PC-9 (cell line): ENCODE measurements at regions of chr10 and their contacts with region 1.

Region 1: GRCh38 chr10:79127151-79127961 is 58.6 kb downstream of the ZMIZ1 start:
- DNase-seq: peak; percentile 91 to 95
- H3K4me3 ChIP-seq: no peak overlapping the region
- H3K27ac ChIP-seq: peak overlapping the region; percentile 44
- H3K4me1 ChIP-seq: peaks cover 61% of the 10 kb centered on the region
- H3K27me3 ChIP-seq: no peaks in the 10 kb centered on the region
- CTCF ChIP-seq: no peak; the same call in 1 of the 2 replicates

Region 2: DNA sequence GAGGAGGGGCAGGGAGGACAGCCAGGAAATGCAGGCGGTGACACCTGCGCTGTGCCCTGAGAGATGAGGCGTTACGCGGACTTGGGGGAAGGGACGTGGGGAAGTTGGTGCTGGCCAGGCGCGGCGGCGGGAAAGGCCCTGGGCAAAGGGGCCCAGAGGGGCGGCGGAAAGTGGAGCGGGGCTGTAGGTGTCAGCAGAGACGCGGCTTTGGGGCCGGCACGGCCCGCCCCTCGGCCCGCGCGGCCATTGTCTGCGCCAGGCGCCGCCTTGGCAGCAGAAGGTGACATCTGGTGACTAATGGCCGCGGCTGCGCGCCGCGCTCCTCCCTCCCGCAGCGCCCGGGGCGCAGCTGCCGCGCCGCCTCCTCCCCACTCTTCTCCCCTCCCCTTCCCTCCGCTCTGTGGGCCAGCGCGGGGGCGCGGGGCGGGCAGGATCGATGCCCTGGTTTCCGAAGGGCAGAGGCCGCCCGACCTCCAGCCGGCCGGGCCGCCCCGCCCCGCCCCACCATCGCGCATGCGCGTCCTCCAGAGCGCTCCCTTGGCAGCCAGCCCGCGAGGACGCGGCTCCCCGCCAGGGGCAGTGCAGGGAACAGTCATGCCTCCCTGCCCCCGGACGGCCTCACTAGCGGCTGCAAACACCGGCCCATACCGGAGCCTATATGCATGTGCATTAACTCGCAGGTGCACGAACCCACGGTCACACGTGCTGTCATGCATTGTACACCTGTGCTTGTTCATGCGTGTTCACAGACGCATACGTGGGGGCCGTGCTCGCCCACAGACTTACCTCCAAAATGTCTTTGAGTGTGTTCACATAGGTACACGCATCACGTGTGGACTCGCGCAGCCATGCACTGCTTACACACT is 824.1 kb before region 1 on chr10:
- CTCF ChIA-PET with region 1: no interaction called
- POLR2A ChIA-PET with region 1: no interaction called
- intact Hi-C with region 1: loop called (anchors 1 kb)
- DNase-seq: peak; percentile 83 to 98
- H3K4me3 ChIP-seq: peak overlapping the region; percentile 66
- H3K27ac ChIP-seq: peak overlapping the region; percentile 42; the same call in 1 of the 2 replicates
- H3K4me1 ChIP-seq: peaks cover 10% of the 10 kb centered on the region
- H3K27me3 ChIP-seq: no peaks in the 10 kb centered on the region
- CTCF ChIP-seq: peak; percentile 81

Region 3: GRCh38 chr10:78747401-78748234 is 379.7 kb before region 1 on chr10:
- CTCF ChIA-PET with region 1: no interaction called
- POLR2A ChIA-PET with region 1: interaction called, 12 read pairs
- intact Hi-C with region 1: no loop called
- DNase-seq: no peak
- H3K4me3 ChIP-seq: no peak overlapping the region
- H3K27ac ChIP-seq: no peak overlapping the region
- H3K4me1 ChIP-seq: no peaks in the 10 kb centered on the region
- H3K27me3 ChIP-seq: no peaks in the 10 kb centered on the region
- CTCF ChIP-seq: no peak

Region 4: GRCh38 chr10:79084012-79084971 is 43.1 kb before region 1 on chr10:
- CTCF ChIA-PET with region 1: no interaction called
- POLR2A ChIA-PET with region 1: no interaction called
- intact Hi-C with region 1: loop called (anchors 2 kb)
- DNase-seq: peak; percentile 82 to 83
- H3K4me3 ChIP-seq: no peak overlapping the region
- H3K27ac ChIP-seq: 0 out of 2 replicates have a peak overlapping the region, but pooled peaks have one; percentile 1
- H3K4me1 ChIP-seq: peaks cover 53% of the 10 kb centered on the region
- H3K27me3 ChIP-seq: no peaks in the 10 kb centered on the region
- CTCF ChIP-seq: no peak

Region 5: DNA sequence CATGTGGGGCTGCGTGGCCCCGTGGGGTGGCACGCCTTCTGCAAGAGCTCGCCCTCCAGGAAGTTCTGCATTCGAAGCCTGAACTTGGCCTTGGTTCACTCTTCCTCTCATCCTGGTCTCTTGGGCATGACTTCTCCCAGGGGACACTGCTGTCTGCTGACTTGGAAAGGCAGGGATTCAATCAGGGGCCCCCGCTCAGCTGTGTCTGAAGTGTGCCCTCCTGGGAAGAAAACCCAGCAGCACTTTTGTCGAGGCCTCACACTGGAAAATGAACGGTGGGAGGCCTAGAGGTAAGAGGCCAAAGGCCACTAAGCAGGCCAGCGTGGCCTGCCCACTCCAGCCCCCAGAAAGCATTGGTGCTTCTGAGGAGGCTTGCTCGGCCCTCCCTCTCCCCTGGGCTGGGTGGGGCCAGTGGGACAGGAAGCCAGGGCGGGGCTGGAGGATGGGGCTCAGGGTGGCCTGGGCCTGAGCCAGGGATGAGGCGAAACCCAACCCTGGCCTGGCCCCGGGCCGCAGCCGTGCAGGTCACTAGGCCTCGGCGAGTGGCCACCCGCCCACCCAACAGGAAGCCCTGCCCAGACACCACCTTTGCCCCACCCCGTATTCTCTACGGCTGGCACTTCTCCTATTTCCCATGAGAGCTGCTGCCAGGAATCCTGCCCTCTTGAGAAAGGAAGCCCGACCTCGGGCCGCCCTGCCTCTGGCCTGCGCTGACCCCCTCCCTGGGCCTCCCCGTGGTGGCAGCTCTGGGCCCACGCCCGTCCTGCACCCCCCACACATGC is 22.5 kb after region 1 on chr10:
- CTCF ChIA-PET with region 1: interaction called, 8 read pairs
- POLR2A ChIA-PET with region 1: interaction called, 3 read pairs
- intact Hi-C with region 1: loop called (anchors 1 kb)
- DNase-seq: peak; percentile 92 to 99
- H3K4me3 ChIP-seq: peak overlapping the region; percentile 29; the same call in 1 of the 2 replicates
- H3K27ac ChIP-seq: peak overlapping the region; percentile 90
- H3K4me1 ChIP-seq: peaks cover 62% of the 10 kb centered on the region
- H3K27me3 ChIP-seq: no peaks in the 10 kb centered on the region
- CTCF ChIP-seq: no peak

Region 6: GRCh38 chr10:79166312-79166721 is 39.0 kb after region 1 on chr10:
- CTCF ChIA-PET with region 1: no interaction called
- POLR2A ChIA-PET with region 1: no interaction called
- intact Hi-C with region 1: no loop called
- DNase-seq: no peak
- H3K4me3 ChIP-seq: no peak overlapping the region
- H3K27ac ChIP-seq: no peak overlapping the region
- H3K4me1 ChIP-seq: peaks cover 19% of the 10 kb centered on the region
- H3K27me3 ChIP-seq: no peaks in the 10 kb centered on the region
- CTCF ChIP-seq: no peak